Ovary (tissue), 10 donors: ENCODE measurements at regions of chr4 and their contacts with region 1.

Region 1: GRCh38 chr4:184474263-184475095 is at the start of gene IRF2:
- DNase-seq: peak; percentile 96 to 98 (median 97)
- H3K4me3 ChIP-seq: peak within 1 kb of the TSS; percentile 67
- H3K27ac ChIP-seq: peak within 1 kb of the TSS; percentile 91 to 95
- H3K4me1 ChIP-seq: peaks cover 1% of the 10 kb centered on the region
- H3K27me3 ChIP-seq: no peaks in the 10 kb centered on the region
- CTCF ChIP-seq: peak in 1 of 3 donors; percentile 4
- EP300 ChIP-seq: peak; percentile 95
- POLR2A ChIP-seq: peak; percentile 97
- total RNA-seq, gene IRF2: 27.8 to 68.4 (median 40.7) TPM

Region 2: DNA sequence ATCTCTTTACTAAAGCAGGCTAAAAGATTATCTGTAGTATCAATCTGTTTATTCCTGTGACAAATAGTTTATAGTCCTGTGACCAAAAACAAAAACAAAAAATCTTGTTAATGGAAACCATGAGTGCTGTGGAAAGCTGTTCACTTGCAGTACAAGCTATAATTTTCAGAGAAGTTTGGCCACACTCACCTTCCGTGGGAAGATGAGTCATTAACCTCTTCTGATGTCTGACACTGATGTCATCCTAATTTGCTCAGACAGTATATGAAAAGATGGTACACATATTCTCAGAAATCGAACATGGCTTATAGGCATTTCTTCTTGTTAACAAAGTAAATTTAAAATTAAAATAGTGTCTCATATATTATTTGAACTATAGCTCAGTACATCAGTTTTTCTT is 236.9 kb before region 1 on chr4:
- intact Hi-C with region 1: no loop called
- DNase-seq: no peak
- H3K4me3 ChIP-seq: no peak overlapping the region
- H3K27ac ChIP-seq: no peak overlapping the region
- H3K4me1 ChIP-seq: no peaks in the 10 kb centered on the region
- H3K27me3 ChIP-seq: no peaks in the 10 kb centered on the region
- CTCF ChIP-seq: no peak
- EP300 ChIP-seq: no peak
- POLR2A ChIP-seq: no peak

Region 3: GRCh38 chr4:184282251-184282713 is 192.2 kb before region 1 on chr4:
- intact Hi-C with region 1: loop called in 3 of 4 experiments (anchors 2 to 10 kb)
- DNase-seq: no peak
- H3K4me3 ChIP-seq: no peak overlapping the region
- H3K27ac ChIP-seq: no peak overlapping the region
- H3K4me1 ChIP-seq: peaks cover 2% of the 10 kb centered on the region
- H3K27me3 ChIP-seq: no peaks in the 10 kb centered on the region
- CTCF ChIP-seq: no peak
- EP300 ChIP-seq: no peak
- POLR2A ChIP-seq: no peak

Region 4: DNA sequence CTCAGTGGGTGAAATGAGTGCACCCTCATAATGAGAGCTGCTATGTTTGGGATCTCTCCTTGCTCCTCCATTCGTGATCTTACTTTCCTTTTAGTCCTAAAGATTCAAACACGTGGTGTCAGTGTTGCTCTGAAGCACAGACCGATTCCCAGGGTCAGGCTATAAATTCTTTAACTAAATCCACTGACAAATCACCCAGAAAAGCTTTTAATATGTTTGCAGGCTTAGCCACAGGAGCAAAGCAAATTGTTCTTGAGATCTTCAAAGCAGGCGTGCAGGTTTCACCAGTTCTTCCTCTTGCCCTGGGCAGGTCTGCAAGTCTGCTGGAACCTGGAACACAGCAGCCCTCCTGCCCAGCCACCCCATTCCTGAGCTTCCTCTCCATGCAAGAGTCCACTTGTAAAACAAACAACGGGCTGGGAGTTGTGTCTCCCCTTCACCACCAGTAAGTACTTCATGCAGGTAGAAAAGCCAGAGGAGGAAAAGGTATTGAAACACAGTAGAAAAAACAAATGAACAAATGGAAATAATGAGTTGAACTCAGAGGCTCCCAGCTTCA is 186.7 kb before region 1 on chr4:
- intact Hi-C with region 1: loop called in 3 of 4 experiments (anchors 2 to 10 kb)
- DNase-seq: no peak
- H3K4me3 ChIP-seq: no peak overlapping the region
- H3K27ac ChIP-seq: peak overlapping the region in 1 of 2 donors; percentile 57
- H3K4me1 ChIP-seq: peaks cover 8% of the 10 kb centered on the region
- H3K27me3 ChIP-seq: no peaks in the 10 kb centered on the region
- CTCF ChIP-seq: peak in 1 of 3 donors; percentile 25
- EP300 ChIP-seq: no peak
- POLR2A ChIP-seq: no peak

Region 5: GRCh38 chr4:184343502-184344177 is 130.8 kb before region 1 on chr4:
- intact Hi-C with region 1: loop called in 1 of 4 experiments (anchors 10 kb)
- DNase-seq: peak; percentile 56 to 70 (median 63)
- H3K4me3 ChIP-seq: peak overlapping the region; percentile 54
- H3K27ac ChIP-seq: no peak overlapping the region
- H3K4me1 ChIP-seq: peaks cover 21% of the 10 kb centered on the region
- H3K27me3 ChIP-seq: no peaks in the 10 kb centered on the region
- CTCF ChIP-seq: no peak
- EP300 ChIP-seq: no peak
- POLR2A ChIP-seq: no peak

Region 6: DNA sequence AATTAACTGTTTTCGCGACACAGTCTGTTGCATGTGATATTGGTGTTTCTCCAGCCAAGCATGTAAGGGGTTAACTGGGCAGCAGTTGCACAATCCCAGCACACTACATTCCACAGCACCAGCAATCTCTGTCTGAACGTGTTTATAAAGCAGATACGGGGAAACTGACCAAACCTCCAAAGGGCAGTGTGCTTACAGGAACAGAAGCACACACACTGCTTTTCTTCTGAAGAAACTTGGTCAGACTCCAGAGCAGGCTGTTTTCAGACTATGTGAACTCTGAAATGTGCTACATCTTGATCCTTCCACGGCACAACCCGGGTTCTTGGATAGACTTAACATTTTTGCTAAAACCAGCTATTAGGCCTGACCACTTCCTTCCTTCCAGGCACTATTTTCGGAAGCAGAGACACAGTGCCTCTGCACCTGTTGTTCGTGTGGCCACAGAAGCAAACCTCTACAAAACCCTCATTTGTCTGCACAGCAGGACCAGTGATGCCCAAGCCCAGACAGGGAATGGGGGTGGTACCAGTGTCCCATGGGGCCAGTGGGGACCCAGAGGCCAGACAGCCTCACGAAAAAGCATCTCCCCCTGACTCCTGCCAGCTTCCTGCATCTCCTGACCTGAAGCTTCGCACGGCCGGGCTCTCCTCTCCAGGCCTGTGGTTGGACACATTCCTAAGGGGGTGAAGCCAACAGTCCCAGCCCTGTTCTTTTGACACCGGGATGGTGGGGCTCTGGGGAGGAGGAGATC is 90.2 kb before region 1 on chr4:
- intact Hi-C with region 1: loop called in 1 of 4 experiments (anchors 10 kb)
- DNase-seq: peak in 4 of 5 donors; percentile 40 to 62 (median 50)
- H3K4me3 ChIP-seq: peak overlapping the region; percentile 26
- H3K27ac ChIP-seq: peak overlapping the region in 1 of 2 donors; percentile 79
- H3K4me1 ChIP-seq: peaks cover 10% of the 10 kb centered on the region
- H3K27me3 ChIP-seq: no peaks in the 10 kb centered on the region
- CTCF ChIP-seq: no peak
- EP300 ChIP-seq: no peak
- POLR2A ChIP-seq: no peak

Region 7: DNA sequence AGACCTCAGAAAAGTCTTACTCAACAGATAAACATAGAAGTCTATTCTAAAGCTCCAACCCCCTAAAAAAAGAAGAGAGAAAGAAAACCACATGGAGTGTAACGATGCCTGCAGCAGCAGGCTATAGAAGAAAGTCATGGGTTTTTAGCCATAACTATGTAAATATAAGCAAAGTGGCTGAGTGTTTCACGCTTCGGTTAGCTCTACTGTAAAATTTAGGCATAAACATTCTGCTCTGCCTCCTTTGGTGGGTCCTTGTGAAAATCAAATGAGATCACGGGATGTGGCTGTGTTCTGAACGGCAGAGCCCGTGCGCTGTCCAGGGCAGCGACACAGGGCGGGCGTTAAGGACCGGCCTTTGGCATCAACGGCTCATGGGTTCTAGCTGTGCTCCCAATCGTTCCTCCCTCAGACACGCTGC is 78.5 kb before region 1 on chr4:
- intact Hi-C with region 1: loop called in 1 of 4 experiments (anchors 10 kb)
- DNase-seq: no peak
- H3K4me3 ChIP-seq: no peak overlapping the region
- H3K27ac ChIP-seq: no peak overlapping the region
- H3K4me1 ChIP-seq: peaks cover 22% of the 10 kb centered on the region
- H3K27me3 ChIP-seq: no peaks in the 10 kb centered on the region
- CTCF ChIP-seq: no peak
- EP300 ChIP-seq: no peak
- POLR2A ChIP-seq: no peak

Region 8: GRCh38 chr4:184453365-184454160 is 20.9 kb before region 1 on chr4:
- intact Hi-C with region 1: no loop called
- DNase-seq: no peak
- H3K4me3 ChIP-seq: no peak overlapping the region
- H3K27ac ChIP-seq: no peak overlapping the region
- H3K4me1 ChIP-seq: peaks cover 20% of the 10 kb centered on the region
- H3K27me3 ChIP-seq: no peaks in the 10 kb centered on the region
- CTCF ChIP-seq: no peak
- EP300 ChIP-seq: no peak
- POLR2A ChIP-seq: no peak

Region 9: DNA sequence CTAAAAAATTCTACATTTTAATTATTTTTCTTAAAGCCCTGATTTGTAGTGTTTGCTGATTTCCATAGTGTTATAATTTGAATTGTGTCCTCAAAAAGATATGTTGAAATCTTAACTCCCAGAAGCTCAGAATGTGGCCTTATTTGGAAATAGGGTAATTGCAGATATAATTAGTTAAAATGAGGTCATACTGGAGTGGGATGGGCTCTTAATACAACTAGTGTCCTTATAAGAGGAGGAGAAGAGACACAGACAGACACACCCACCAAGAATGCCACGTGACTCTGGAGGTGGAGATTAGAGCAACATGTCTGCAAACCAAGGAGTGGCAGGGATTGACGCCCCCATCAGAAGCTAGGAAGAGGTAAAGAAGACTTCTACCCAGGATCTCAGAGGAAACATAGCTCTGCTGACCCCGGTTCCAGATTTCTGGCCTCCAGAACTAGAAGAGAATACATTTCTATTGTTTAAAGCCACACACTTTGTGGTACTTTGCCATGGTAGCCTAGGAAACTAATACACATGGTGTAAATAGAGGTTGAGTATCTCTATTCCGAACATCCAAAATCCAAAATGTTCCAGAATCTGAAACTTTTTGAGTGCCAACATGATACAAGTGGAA is 70.4 kb after region 1 on chr4:
- intact Hi-C with region 1: no loop called
- DNase-seq: no peak
- H3K4me3 ChIP-seq: no peak overlapping the region
- H3K27ac ChIP-seq: no peak overlapping the region
- H3K4me1 ChIP-seq: no peaks in the 10 kb centered on the region
- H3K27me3 ChIP-seq: no peaks in the 10 kb centered on the region
- CTCF ChIP-seq: no peak
- EP300 ChIP-seq: no peak
- POLR2A ChIP-seq: no peak

Region 10: GRCh38 chr4:186240848-186241491 is 1766.5 kb after region 1 on chr4:
- intact Hi-C with region 1: no loop called
- DNase-seq: no peak
- H3K4me3 ChIP-seq: no peak overlapping the region
- H3K27ac ChIP-seq: no peak overlapping the region
- H3K4me1 ChIP-seq: no peaks in the 10 kb centered on the region
- H3K27me3 ChIP-seq: no peaks in the 10 kb centered on the region
- CTCF ChIP-seq: no peak
- EP300 ChIP-seq: no peak
- POLR2A ChIP-seq: no peak